WTC11 (cell line): ENCODE measurements at regions of chr2 and their contacts with region 1.

Region 1: DNA sequence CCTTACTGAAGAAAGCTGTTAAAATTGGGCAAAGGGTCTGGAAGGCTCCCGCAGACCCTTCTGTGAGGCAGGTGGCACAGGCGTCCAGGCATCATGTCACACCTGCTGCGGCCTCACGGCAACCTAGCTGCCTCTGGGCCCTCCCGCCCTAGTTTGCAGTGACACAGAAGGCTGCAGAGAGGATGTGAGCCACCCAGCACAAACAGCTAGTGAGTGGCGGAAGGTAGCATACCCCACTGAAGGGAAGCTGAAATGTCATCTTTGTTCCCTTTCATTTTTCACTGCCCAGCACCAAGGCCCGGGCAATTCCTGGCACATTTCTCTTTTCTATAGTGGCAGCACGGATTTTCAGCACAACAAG is 53.8 kb downstream of the TRAPPC12 start:
- DNase-seq: no peak
- ATAC-seq: peak; percentile 34; the same call in 1 of the 2 replicates
- H3K4me3 Mint-ChIP-seq: no peak overlapping the region
- H3K27ac Mint-ChIP-seq: no peak overlapping the region
- H3K4me1 Mint-ChIP-seq: 0 out of 2 replicates have a peak, but pooled peaks cover 3% of the 10 kb centered on the region
- H3K27me3 Mint-ChIP-seq: no peaks in the 10 kb centered on the region
- CTCF ChIP-seq: no peak

Region 2: DNA sequence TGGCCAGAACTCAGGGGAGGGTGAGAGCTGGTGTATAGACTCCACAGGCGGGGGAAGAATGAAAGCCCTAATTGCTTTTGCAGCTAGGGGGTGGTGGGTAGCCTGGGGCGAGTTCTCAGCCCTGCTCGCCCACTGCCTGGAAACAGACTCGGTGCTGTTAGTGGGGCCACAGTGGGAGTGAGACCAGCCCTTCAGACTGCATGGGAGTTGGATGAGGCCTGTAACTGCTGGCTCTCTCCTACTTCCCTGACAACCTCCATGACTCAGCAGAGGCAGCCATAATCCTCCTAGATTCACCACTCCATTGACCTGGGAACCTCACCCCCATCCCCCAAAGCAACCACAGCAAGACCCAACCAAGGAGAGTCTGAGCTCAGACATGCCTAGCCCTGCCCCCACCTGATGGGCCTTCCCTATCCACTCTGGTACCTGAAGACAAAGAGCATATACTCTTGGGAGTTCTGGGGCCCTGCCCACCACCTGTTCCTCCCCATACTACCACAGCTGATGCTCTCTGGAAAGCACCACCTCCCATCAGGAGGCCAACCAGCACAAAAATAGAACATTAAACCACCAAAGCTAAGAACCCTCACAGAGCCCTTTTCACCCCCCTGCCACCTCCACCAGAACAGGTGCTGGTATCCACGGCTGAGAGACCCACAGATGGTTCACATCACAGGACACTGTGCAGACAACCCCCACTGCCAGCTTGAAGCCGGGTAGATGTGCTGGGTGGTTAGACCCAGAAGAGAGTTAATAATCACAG is 282.0 kb before region 1 on chr2:
- CTCF ChIA-PET with region 1: no interaction called
- POLR2A ChIA-PET with region 1: no interaction called
- DNase-seq: no peak
- ATAC-seq: no peak
- H3K4me3 Mint-ChIP-seq: no peak overlapping the region
- H3K27ac Mint-ChIP-seq: no peak overlapping the region
- H3K4me1 Mint-ChIP-seq: 0 out of 2 replicates have a peak, but pooled peaks cover 3% of the 10 kb centered on the region
- H3K27me3 Mint-ChIP-seq: no peaks in the 10 kb centered on the region
- CTCF ChIP-seq: no peak

Region 3: DNA sequence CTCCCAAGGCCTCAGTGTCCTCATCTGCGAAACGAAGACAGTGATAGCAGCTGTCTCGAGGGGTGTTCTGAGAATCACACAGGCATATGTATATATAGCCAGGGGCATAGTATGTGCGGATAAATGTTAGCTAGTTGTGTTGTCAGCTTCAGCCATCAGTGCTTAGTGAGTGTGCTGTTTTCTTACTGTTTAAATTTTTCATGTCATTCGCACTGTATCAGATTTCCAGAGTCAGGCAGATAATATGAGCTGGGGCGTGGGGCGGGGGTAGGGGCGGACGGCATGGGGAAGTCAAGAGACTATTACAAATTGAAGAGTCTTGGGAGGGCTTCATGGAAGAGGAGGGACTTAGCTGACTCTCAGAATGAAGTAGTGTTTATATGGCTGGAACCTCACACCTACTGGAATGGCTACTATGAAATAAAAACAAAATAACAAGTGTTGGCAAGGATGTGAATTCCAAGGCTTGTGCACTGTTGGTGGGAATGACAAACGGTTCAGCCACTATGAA is 46.8 kb before region 1 on chr2:
- CTCF ChIA-PET with region 1: no interaction called
- POLR2A ChIA-PET with region 1: no interaction called
- DNase-seq: no peak
- ATAC-seq: no peak
- H3K4me3 Mint-ChIP-seq: no peak overlapping the region
- H3K27ac Mint-ChIP-seq: no peak overlapping the region; the same call in 1 of the 2 replicates
- H3K4me1 Mint-ChIP-seq: no peaks in the 10 kb centered on the region
- H3K27me3 Mint-ChIP-seq: no peaks in the 10 kb centered on the region
- CTCF ChIP-seq: no peak

Region 4: GRCh38 chr2:3461801-3462492 is 28.6 kb after region 1 on chr2:
- CTCF ChIA-PET with region 1: interaction called, 11 read pairs
- POLR2A ChIA-PET with region 1: no interaction called
- DNase-seq: no peak
- ATAC-seq: peak; percentile 43
- H3K4me3 Mint-ChIP-seq: no peak overlapping the region
- H3K27ac Mint-ChIP-seq: peak overlapping the region; percentile 82
- H3K4me1 Mint-ChIP-seq: peaks cover 26% of the 10 kb centered on the region
- H3K27me3 Mint-ChIP-seq: no peaks in the 10 kb centered on the region; the same call in 1 of the 2 replicates
- CTCF ChIP-seq: 0 out of 2 replicates have a peak, but pooled peaks have one; percentile 23